ENCODE measurements at regions of chr22 and their contacts with region 1.

Region 1: GRCh38 chr22:40679964-40680818 is 907 bp downstream of the MCHR1 start:
- DNase-seq: no peak
- ATAC-seq: no peak
- H3K4me3 ChIP-seq: no peak overlapping the region
- H3K4me3 Mint-ChIP-seq: no peak overlapping the region
- H3K27ac ChIP-seq: no peak overlapping the region
- H3K27ac Mint-ChIP-seq: peak overlapping the region in 1 of 9 donors; percentile 34
- H3K4me1 ChIP-seq: no peaks in the 10 kb centered on the region
- H3K4me1 Mint-ChIP-seq: peaks cover 4 to 31% (median 9%) of the 10 kb centered on the region in 7 donors
- H3K27me3 ChIP-seq: no peaks in the 10 kb centered on the region
- H3K27me3 Mint-ChIP-seq: peaks cover 0 to 16% (median 15%) of the 10 kb centered on the region in 5 donors

Region 2: DNA sequence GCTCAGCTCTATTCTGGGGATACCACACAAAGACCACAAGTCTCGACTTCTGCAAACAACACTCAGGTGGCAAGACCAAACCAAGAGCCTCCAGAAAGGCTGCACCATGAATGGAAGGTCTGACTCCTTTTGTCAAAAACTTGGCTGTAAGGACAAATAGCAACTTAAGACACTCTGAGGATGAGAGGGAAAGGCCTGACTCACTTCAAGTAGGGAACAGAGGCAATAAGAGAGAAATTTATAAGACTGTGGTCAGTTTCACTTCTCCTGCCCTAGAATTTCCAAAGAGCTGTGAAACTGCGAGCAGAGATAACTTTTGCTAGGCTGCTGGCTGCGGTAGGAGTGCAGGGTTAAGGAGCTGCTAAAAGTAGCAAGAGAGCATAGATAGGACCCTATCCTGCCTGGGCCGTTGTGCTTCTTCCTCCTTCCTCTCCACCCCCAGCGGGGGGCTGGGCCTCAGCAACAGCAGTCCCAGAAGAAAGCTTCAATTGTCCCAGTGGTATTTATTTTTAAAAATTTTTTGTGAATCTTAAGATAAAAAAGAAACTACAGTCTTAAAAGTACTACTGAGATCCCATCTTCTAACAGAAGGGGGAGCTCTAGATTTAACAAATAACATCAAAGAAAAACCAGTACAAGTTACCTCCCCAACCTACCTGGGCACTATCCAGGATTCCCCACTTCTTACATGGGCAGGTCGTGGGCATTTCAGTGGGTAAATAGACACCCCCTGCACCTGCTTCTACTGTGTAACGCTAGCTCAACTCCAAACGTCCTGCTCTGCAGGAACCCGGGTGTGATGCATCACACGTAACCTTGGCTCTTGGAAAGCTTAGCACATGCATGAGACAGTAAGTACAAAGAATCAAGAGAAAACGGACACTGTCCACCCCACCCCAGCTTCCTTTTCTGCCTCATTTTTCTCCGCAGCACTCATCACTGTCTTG is 243.4 kb before region 1 on chr22:
- CTCF ChIA-PET with region 1: interaction called, 3 read pairs
- POLR2A ChIA-PET with region 1: no interaction called
- intact Hi-C with region 1: loop called in 1 of 2 experiments (anchors 1 kb)
- DNase-seq: peak in 7 of 9 donors; percentile 51 to 73 (median 65)
- ATAC-seq: peak; percentile 79
- H3K4me3 ChIP-seq: no peak overlapping the region
- H3K4me3 Mint-ChIP-seq: peak overlapping the region in 7 of 10 donors; percentile 7 to 73 (median 39)
- H3K27ac ChIP-seq: peak overlapping the region; percentile 24
- H3K27ac Mint-ChIP-seq: peak overlapping the region; percentile 0 to 88 (median 68)
- H3K4me1 ChIP-seq: peaks cover 10 to 23% of the 10 kb centered on the region in 2 donors
- H3K4me1 Mint-ChIP-seq: peaks cover 28 to 77% (median 62%) of the 10 kb centered on the region in 7 donors
- H3K27me3 ChIP-seq: no peaks in the 10 kb centered on the region
- H3K27me3 Mint-ChIP-seq: no peaks in the 10 kb centered on the region

Region 3: DNA sequence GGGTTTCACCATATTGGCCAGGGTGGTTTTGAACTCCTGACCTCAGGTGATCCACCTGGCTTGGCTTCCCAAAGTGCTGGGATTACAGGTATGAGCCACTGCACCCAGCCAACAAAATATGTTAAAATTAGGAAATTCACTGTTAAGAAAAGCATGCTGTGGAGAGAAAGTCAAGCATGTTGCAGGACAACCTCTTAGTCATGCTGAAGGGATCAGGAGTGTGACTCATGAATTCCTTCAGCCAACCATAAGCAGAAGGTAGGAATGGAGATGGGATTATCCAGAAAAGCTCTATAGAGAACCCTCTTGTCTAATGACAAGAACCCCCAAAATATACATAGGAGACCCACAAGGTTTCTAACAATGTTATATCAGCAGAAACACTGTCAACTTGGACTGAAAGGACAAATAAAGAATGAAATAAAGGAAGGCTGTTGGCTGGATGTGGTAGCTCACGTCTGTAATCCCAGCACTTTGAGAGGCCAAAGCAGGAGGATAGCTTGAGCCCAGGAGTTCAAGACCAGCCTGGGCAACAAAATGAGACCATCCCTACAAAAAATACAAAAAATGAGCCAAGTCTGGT is 59.6 kb before region 1 on chr22:
- CTCF ChIA-PET with region 1: no interaction called
- POLR2A ChIA-PET with region 1: no interaction called
- intact Hi-C with region 1: no loop called
- DNase-seq: no peak
- ATAC-seq: no peak
- H3K4me3 ChIP-seq: no peak overlapping the region
- H3K4me3 Mint-ChIP-seq: no peak overlapping the region
- H3K27ac ChIP-seq: no peak overlapping the region
- H3K27ac Mint-ChIP-seq: peak overlapping the region in 2 of 9 donors; percentile 53 to 86
- H3K4me1 ChIP-seq: no peaks in the 10 kb centered on the region
- H3K4me1 Mint-ChIP-seq: peaks cover 15 to 49% (median 38%) of the 10 kb centered on the region in 7 donors
- H3K27me3 ChIP-seq: no peaks in the 10 kb centered on the region
- H3K27me3 Mint-ChIP-seq: no peaks in the 10 kb centered on the region

Region 4: DNA sequence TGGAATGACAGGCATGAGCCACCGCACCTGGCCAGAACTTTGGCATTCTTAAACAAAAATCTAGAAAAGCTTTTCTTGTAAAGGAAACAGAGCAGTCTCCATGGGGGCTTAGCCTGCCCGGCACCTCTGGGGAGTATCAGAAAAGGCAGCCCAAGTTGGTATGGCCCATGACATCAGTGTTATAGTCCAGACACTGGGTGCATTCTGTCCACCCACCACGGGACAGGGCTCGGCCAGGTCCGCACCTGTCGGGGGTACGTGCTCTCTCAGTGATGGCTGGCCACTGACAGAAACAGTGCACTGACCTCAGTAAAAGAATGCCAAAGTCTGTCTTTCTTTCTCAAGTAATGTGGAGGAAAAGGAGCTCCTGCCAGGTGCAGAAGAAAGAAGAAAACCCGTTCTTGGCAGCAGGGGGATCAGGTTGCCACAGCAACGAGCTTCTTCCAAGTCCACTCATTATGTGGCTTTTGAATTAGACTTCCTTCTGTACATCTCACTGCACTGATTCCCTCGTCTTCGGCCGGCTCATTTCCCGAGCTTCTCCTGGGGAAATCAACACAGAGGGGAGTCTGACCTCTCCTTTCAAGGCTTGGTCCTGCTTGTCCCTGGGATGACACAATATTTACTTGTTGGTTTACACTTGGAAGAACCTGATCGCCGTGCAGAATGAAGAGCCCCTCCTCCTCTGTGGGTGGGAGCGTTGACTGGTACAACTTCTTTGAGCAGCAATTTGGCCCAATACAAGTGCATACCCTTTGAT is 34.2 kb after region 1 on chr22:
- CTCF ChIA-PET with region 1: interaction called, 6 read pairs
- POLR2A ChIA-PET with region 1: interaction called, 4 read pairs
- intact Hi-C with region 1: loop called (anchors 1 kb)
- DNase-seq: no peak
- ATAC-seq: no peak
- H3K4me3 ChIP-seq: no peak overlapping the region
- H3K4me3 Mint-ChIP-seq: peak overlapping the region in 9 of 10 donors; percentile 14 to 76 (median 62)
- H3K27ac ChIP-seq: no peak overlapping the region
- H3K27ac Mint-ChIP-seq: peak overlapping the region in 2 of 9 donors; percentile 31 to 46
- H3K4me1 ChIP-seq: peaks cover 0 to 5% of the 10 kb centered on the region in 2 donors
- H3K4me1 Mint-ChIP-seq: peaks cover 10 to 27% (median 21%) of the 10 kb centered on the region in 7 donors
- H3K27me3 ChIP-seq: no peaks in the 10 kb centered on the region
- H3K27me3 Mint-ChIP-seq: peaks cover 0 to 11% (median 0%) of the 10 kb centered on the region in 5 donors

Region 5: DNA sequence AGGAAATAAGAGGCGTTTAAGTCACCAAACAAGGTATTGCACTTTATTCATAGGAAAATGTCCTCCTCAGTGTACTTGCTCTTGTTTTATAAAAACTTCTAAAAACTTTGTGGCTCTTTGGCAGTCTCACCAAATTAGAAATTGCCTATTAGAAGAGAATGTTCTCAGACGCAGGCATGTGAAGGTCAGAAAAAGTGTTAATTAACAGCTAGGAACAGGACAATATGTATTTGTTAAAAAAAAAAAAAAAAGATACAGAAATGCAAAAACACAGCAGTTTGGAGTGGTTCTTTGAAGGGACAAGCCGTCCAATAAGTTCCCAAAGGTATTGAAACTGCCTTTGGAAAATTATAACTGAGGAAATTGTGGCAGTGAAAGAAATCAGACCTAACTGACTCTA is 71.1 kb after region 1 on chr22:
- CTCF ChIA-PET with region 1: interaction called, 145 read pairs
- POLR2A ChIA-PET with region 1: no interaction called
- intact Hi-C with region 1: no loop called
- DNase-seq: no peak
- ATAC-seq: no peak
- H3K4me3 ChIP-seq: no peak overlapping the region
- H3K4me3 Mint-ChIP-seq: no peak overlapping the region
- H3K27ac ChIP-seq: no peak overlapping the region
- H3K27ac Mint-ChIP-seq: no peak overlapping the region
- H3K4me1 ChIP-seq: no peaks in the 10 kb centered on the region
- H3K4me1 Mint-ChIP-seq: peaks cover 0 to 10% (median 0%) of the 10 kb centered on the region in 7 donors
- H3K27me3 ChIP-seq: no peaks in the 10 kb centered on the region
- H3K27me3 Mint-ChIP-seq: peaks cover 0 to 14% (median 0%) of the 10 kb centered on the region in 5 donors

Region 6: DNA sequence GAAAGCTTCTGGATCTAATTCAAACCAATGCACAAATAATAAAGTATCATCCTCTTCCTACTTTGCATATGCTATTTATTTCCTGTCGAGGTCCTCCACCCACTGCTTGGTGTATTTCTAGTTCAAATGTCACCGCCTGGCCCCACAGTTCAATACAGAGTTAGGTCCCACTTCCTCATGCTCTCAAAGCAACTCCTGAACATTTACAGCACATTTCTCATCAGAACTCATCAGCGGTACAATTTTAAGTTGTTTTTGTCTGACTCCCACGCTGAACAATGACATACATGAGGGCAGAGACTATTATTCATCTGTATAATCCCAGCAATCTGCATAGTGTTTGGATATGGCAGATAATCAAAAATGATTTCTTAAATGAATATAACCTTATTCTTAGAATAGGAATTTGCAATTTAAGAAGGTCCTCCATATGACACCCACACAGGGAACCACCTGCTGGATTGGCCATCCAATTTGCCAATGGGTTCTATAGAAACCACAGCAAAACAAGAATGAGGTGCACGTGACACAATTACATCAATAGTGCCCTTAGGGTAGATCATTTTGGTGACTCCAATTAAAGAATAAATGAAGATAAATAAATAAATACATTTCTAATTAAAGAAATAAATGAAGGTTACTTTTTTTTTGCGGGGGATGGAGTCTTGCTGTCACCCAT is 84.7 kb after region 1 on chr22:
- CTCF ChIA-PET with region 1: interaction called, 145 read pairs
- POLR2A ChIA-PET with region 1: interaction called, 32 read pairs
- intact Hi-C with region 1: loop called (anchors 1 kb)
- DNase-seq: peak in 6 of 9 donors; percentile 38 to 60 (median 52)
- ATAC-seq: peak; percentile 73
- H3K4me3 ChIP-seq: no peak overlapping the region
- H3K4me3 Mint-ChIP-seq: peak overlapping the region; percentile 24 to 72 (median 58)
- H3K27ac ChIP-seq: peak overlapping the region; percentile 42
- H3K27ac Mint-ChIP-seq: peak overlapping the region; percentile 72 to 97 (median 91)
- H3K4me1 ChIP-seq: peaks cover 0 to 11% of the 10 kb centered on the region in 2 donors
- H3K4me1 Mint-ChIP-seq: peaks cover 15 to 31% (median 24%) of the 10 kb centered on the region in 7 donors
- H3K27me3 ChIP-seq: no peaks in the 10 kb centered on the region
- H3K27me3 Mint-ChIP-seq: no peaks in the 10 kb centered on the region

Region 7: DNA sequence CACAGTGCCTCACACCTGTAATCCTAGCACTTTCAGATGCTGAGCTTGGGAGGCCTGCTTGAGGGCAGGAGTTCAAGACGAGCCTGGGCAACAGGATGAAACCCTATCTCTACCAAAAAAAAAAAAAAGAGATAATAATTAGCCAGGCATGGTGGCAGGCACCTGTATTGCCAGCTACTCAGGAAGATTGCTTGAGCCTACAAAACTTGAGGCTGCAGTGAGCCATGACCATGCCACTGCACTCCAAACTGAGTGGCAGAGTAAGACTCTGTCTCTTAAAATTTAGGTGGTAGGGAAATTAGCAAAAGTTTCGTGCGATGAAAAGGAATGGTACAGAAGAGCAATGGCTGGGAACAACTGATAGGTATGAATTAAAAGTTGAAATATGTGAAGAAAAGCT is 158.3 kb after region 1 on chr22:
- CTCF ChIA-PET with region 1: no interaction called
- POLR2A ChIA-PET with region 1: no interaction called
- intact Hi-C with region 1: loop called in 1 of 2 experiments (anchors 5 kb)
- DNase-seq: no peak
- ATAC-seq: no peak
- H3K4me3 ChIP-seq: no peak overlapping the region
- H3K4me3 Mint-ChIP-seq: no peak overlapping the region
- H3K27ac ChIP-seq: no peak overlapping the region
- H3K27ac Mint-ChIP-seq: peak overlapping the region in 4 of 9 donors; percentile 26 to 57 (median 50)
- H3K4me1 ChIP-seq: no peaks in the 10 kb centered on the region
- H3K4me1 Mint-ChIP-seq: peaks cover 1 to 37% (median 29%) of the 10 kb centered on the region in 7 donors
- H3K27me3 ChIP-seq: no peaks in the 10 kb centered on the region
- H3K27me3 Mint-ChIP-seq: no peaks in the 10 kb centered on the region

Measured in naive thymus-derived CD4-positive, alpha-beta T cell (primary cell).